ENCODE measurements at regions of chr13 and their contacts with region 1.

Region 1: DNA sequence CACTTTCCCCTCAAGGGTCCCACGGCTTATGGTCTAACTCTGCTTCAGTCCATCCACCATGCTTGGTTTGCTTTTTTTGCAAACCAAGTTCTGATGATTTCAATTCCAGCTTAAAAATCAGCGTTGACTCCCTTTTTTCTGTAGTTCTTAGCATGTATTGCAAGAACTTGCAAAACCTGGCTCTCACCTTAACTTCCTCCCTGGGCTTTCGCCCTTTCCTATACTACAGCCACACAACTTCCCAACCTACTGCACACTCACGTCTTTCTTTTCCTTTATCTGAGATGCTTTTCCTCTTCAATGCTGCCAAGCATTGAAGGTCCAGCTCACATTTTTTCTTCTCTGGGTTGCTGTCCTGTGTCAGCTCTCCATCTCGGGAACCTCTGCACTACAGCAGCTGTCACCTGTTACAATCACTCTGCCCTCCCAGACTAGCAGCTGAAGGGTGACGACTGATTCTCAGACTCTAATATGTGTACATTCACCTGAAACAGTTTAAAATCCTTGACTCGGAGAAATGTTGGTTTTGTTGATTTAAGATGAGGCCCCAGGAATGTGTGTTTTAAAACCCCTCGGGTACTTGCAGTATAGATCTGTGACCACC is 143.7 kb downstream of the FREM2 start:
- DNase-seq: no peak
- H3K4me3 ChIP-seq: no peak overlapping the region
- H3K27ac ChIP-seq: no peak overlapping the region
- H3K4me1 ChIP-seq: no peaks in the 10 kb centered on the region
- H3K27me3 ChIP-seq: no peaks in the 10 kb centered on the region
- CTCF ChIP-seq: no peak

Region 2: DNA sequence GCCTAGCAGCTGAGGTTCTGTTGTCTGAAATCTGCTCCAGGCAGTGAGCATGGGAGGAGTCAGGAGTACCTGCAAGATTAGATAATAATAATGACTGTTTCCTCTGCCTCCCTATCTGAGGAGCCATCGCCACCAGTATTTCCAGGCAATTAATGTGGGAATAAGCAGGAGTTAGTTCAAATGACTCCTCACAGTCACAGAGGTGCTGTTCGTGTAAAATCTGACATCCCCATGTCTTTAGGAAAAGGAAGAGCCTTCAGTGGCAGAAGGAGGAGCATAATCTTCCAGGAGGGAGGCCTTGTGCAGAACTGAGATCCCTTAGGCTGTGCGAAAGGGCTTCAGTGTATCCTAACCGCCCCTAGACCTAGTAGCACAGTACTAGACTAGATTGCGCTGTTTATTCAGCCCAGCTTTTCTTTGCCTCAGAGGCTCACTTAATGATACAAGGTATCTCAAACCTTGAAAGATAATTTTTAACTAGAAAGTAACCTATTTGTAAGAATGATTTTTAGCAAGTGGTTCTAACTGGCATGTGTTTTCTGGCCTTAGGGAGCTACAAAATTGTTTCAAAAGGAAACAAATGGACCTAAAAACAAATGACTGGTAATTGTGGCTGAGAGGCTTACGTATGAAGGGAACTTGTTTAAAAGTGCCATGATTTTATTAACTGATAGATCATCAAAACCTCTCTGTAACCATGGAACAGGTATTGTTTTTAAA is 94.7 kb before region 1 on chr13:
- CTCF ChIA-PET with region 1: no interaction called
- dilution Hi-C with region 1: no loop called
- in situ Hi-C with region 1: no loop called
- intact Hi-C with region 1: no loop called
- DNase-seq: no peak
- H3K4me3 ChIP-seq: no peak overlapping the region
- H3K27ac ChIP-seq: no peak overlapping the region
- H3K4me1 ChIP-seq: no peaks in the 10 kb centered on the region
- H3K27me3 ChIP-seq: no peaks in the 10 kb centered on the region
- CTCF ChIP-seq: no peak

Region 3: GRCh38 chr13:38763439-38764381 is 66.8 kb before region 1 on chr13:
- CTCF ChIA-PET with region 1: no interaction called
- dilution Hi-C with region 1: no loop called
- in situ Hi-C with region 1: no loop called
- intact Hi-C with region 1: no loop called
- DNase-seq: peak; percentile 23
- H3K4me3 ChIP-seq: no peak overlapping the region
- H3K27ac ChIP-seq: no peak overlapping the region
- H3K4me1 ChIP-seq: peaks cover 10% of the 10 kb centered on the region
- H3K27me3 ChIP-seq: no peaks in the 10 kb centered on the region
- CTCF ChIP-seq: peak; percentile 75 to 83

Region 4: GRCh38 chr13:38804536-38804935 is 26.0 kb before region 1 on chr13:
- CTCF ChIA-PET with region 1: no interaction called
- dilution Hi-C with region 1: loop called (anchors 5 kb)
- in situ Hi-C with region 1: no loop called
- intact Hi-C with region 1: no loop called
- DNase-seq: peak; percentile 82
- H3K4me3 ChIP-seq: no peak overlapping the region
- H3K27ac ChIP-seq: peak overlapping the region; percentile 49
- H3K4me1 ChIP-seq: peaks cover 22% of the 10 kb centered on the region
- H3K27me3 ChIP-seq: no peaks in the 10 kb centered on the region
- CTCF ChIP-seq: no peak

Region 5: GRCh38 chr13:39952249-39953233 is 1122.0 kb after region 1 on chr13:
- CTCF ChIA-PET with region 1: no interaction called
- dilution Hi-C with region 1: no loop called
- in situ Hi-C with region 1: no loop called
- intact Hi-C with region 1: no loop called
- DNase-seq: no peak
- H3K4me3 ChIP-seq: no peak overlapping the region
- H3K27ac ChIP-seq: no peak overlapping the region
- H3K4me1 ChIP-seq: no peaks in the 10 kb centered on the region
- H3K27me3 ChIP-seq: no peaks in the 10 kb centered on the region
- CTCF ChIP-seq: no peak